Activated CD8-positive, alpha-beta T cell treated with anti-CD3 and anti-CD28 coated beads for 36 hours (primary cell): ENCODE measurements at regions of chr1 and their contacts with region 1.

Region 1: DNA sequence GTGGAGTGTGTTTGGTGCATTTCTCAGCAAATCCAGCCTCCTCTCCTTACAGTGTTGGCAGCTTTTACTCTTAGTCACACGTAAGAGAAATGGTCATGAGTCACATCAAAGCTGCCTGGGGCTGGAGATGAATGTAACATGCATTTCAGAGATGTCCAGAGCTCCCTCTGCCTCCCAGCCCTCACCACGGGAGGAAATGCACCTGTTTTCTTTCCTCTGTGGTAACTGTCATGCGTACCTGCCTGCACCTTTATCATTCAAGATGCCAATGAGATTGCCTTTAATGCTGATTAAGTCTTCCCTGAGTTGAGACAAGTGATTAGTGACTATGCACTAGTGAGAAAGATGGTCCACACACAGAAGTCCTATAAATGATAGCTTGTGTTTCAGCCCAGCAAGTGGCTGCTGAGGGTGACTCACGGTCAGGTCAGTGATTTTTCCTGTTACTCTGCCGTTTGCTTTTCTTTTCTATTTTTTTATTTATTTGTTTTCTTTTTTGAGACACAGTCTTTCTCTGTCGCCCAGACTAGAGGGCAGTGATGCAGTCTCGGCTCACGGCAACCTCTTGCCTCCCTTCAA is 277.3 kb upstream of the FMN2 start:
- DNase-seq: peak; percentile 56
- ATAC-seq: peak; percentile 81
- H3K4me3 Mint-ChIP-seq: no peak overlapping the region
- H3K27ac Mint-ChIP-seq: no peak overlapping the region
- H3K4me1 Mint-ChIP-seq: peaks cover 24% of the 10 kb centered on the region
- H3K27me3 Mint-ChIP-seq: no peaks in the 10 kb centered on the region
- CTCF ChIP-seq: no peak

Region 2: GRCh38 chr1:239418681-239419080 is 395.7 kb before region 1 on chr1:
- CTCF ChIA-PET with region 1: no interaction called
- POLR2A ChIA-PET with region 1: no interaction called
- intact Hi-C with region 1: loop called (anchors 10 kb)
- DNase-seq: no peak
- ATAC-seq: no peak
- H3K4me3 Mint-ChIP-seq: no peak overlapping the region
- H3K27ac Mint-ChIP-seq: no peak overlapping the region
- H3K4me1 Mint-ChIP-seq: peaks cover 2% of the 10 kb centered on the region
- H3K27me3 Mint-ChIP-seq: no peaks in the 10 kb centered on the region
- CTCF ChIP-seq: no peak

Region 3: GRCh38 chr1:239575113-239575512 is 239.3 kb before region 1 on chr1:
- CTCF ChIA-PET with region 1: no interaction called
- POLR2A ChIA-PET with region 1: no interaction called
- intact Hi-C with region 1: no loop called
- DNase-seq: no peak
- ATAC-seq: peak; percentile 85
- H3K4me3 Mint-ChIP-seq: no peak overlapping the region
- H3K27ac Mint-ChIP-seq: no peak overlapping the region
- H3K4me1 Mint-ChIP-seq: peaks cover 7% of the 10 kb centered on the region
- H3K27me3 Mint-ChIP-seq: no peaks in the 10 kb centered on the region
- CTCF ChIP-seq: no peak